A549 (cell line): ENCODE measurements at regions of chr12 and their contacts with region 1.

Region 1: DNA sequence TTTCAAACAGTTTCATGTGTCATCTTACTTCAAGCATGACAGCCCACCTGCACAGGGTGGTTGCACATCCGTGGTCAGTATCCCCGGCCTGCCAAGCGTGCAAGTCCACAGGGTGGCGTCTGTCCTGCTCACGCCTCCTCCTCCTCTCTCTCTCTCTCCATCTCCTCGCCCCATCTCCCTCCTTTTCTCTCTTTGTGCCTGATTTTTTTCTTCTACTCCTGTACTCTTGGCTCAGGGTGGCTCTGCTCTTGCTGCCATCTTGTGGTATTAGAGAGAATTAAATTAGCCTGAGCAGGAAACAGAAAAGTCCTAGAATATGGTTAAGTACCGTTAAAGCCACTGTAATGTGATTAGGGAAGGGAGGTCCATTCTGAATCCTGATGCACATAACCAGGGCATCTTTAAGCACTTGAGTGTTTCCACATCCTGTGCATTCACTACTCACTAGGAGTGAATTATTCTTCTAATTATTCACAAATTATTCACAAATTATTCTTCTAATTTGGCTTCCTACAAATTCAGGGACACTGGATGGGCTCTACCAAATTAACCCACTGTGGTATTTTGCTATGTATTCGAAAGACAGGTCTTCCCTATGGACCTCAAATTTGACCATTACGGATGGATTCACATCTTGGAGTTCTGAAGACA is 25.5 kb upstream of the DTX1 start:
- DNase-seq: peak; percentile 72 to 88
- ATAC-seq: peak; percentile 87 to 98
- H3K4me3 ChIP-seq: no peak overlapping the region
- H3K27ac ChIP-seq: no peak overlapping the region
- H3K4me1 ChIP-seq: no peaks in the 10 kb centered on the region
- CTCF ChIP-seq: peak; percentile 88
- EP300 ChIP-seq: no peak
- POLR2A ChIP-seq: no peak
- RAD21 ChIP-seq: peak; percentile 81 to 83

Region 2: DNA sequence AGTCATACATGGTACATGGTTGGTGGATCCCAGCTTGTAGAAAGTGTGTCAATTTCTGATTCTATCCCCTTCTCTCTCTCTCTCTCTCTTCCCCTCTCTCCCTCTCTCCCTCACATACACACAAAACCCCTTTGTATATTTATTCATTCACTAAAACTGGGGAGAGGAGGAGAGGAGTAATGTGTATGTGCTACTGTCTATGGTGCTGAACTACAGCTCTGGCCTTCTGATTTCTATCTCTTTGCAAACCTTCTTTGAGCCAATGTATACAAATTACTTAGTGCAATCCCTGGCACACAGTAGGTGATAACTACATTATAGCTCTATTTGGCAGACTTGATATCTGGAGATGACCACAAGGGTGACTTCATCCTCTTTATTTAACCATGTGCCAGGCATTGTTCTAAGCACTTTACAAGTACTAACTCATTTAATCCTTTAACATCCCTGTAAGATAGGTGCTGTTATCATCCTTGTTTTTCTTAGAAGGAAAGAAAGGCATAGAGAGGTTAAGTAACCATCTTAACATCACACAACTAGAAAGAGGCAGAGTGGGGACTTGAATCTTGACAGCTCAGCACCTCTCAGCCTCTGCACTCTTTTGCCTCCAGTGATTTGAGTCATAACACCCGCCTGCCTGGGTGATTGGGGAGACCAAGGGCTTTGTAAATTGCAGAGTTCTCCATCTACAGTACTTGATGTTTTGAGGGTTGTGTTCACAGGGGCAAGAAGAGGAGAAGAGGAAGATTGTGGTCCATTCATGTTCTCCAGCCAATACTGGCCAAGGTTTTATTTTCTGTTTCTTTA is 218.2 kb before region 1 on chr12:
- CTCF ChIA-PET with region 1: no interaction called
- POLR2A ChIA-PET with region 1: no interaction called
- DNase-seq: no peak
- ATAC-seq: peak in 1 of 2 experiments; percentile 35; a peak in 1 of 6 replicates
- H3K4me3 ChIP-seq: no peak overlapping the region
- H3K27ac ChIP-seq: no peak overlapping the region
- H3K4me1 ChIP-seq: peaks cover 7% of the 10 kb centered on the region
- CTCF ChIP-seq: no peak
- EP300 ChIP-seq: no peak
- POLR2A ChIP-seq: no peak
- RAD21 ChIP-seq: no peak

Region 3: DNA sequence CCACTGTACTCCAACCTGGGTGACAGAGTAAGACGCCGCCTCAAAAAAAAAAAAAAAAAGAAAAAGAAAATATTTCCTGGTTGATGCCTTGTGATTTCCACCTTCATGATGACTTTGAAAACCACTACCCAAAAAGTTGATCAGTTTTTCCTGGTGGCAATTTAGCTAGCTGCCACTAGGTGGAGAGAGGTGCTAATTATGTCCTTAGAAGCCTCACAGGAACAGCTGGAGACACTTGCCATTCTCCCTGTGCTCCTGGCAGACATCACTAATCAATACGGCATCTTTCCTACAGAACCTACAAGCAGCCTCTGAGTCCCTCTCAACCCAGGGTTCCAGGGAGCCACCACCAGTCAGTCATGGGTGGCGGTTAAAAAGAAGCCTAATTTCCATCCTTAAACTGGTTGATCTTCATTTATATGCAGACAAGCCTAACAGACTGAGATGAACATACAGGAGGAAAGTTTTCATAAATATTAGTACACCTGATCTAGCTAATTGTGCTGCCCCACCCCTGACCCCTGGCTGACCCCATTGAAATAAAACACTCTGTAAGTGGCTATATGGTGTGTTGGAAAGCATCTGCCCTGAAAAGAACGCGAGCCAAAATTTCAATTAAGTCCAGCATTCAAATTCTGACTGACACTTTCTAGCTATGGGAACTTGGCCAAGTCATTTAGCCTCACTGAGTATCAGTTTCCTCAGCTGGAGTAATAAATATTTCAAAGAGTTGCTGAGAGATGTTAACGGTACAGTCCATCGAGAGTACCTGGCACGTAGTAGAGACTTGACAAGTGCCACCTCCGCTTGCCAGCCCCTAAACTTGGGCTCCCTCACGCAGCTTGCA is 130.5 kb before region 1 on chr12:
- CTCF ChIA-PET with region 1: interaction called, 15 read pairs
- POLR2A ChIA-PET with region 1: no interaction called
- DNase-seq: peak; percentile 61 to 79
- ATAC-seq: peak; percentile 35 to 63; a peak in 3 of 6 replicates
- H3K4me3 ChIP-seq: no peak overlapping the region
- H3K27ac ChIP-seq: peak overlapping the region in 1 of 2 experiments; percentile 13; a peak in 2 of 6 replicates
- H3K4me1 ChIP-seq: peaks cover 43% of the 10 kb centered on the region
- CTCF ChIP-seq: peak; percentile 67
- EP300 ChIP-seq: no peak
- POLR2A ChIP-seq: no peak
- RAD21 ChIP-seq: peak; percentile 57 to 75

Region 4: DNA sequence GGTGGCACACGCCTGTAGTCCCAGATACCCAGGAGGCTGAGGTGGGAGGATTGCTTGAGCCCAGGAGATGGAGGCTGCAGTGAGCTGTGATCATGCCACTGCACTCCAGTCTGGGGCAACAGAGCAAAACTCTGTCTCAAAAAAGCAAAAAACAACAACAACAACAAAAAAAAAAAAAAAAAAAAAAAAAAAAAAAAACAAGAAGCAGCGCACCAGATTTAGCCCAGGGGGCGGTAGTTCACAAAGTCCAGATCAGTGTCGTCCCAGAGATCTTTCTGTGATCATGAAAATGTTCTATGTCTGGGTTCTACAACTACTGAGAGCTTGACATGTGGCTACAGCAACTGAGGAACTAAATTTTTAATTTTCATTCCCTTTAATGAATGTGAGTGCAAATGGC is 25.2 kb before region 1 on chr12:
- CTCF ChIA-PET with region 1: interaction called, 10 read pairs
- POLR2A ChIA-PET with region 1: no interaction called
- DNase-seq: peak; percentile 20 to 33
- ATAC-seq: 0 out of 6 replicates have a peak, but pooled peaks of 1 of the 2 experiments have one; percentile 32
- H3K4me3 ChIP-seq: no peak overlapping the region
- H3K27ac ChIP-seq: no peak overlapping the region
- H3K4me1 ChIP-seq: peaks cover 10% of the 10 kb centered on the region; the same call in 1 of the 3 replicates
- CTCF ChIP-seq: peak; percentile 21; the same call in 1 of the 3 replicates
- EP300 ChIP-seq: no peak
- POLR2A ChIP-seq: no peak
- RAD21 ChIP-seq: 0 out of 5 replicates have a peak, but pooled peaks of 1 of the 2 experiments have one; percentile 25

Region 5: GRCh38 chr12:113086249-113087164 is 55.5 kb after region 1 on chr12:
- CTCF ChIA-PET with region 1: no interaction called
- POLR2A ChIA-PET with region 1: no interaction called
- DNase-seq: no peak
- ATAC-seq: no peak
- H3K4me3 ChIP-seq: no peak overlapping the region
- H3K27ac ChIP-seq: no peak overlapping the region
- H3K4me1 ChIP-seq: no peaks in the 10 kb centered on the region
- CTCF ChIP-seq: no peak
- EP300 ChIP-seq: no peak
- POLR2A ChIP-seq: no peak
- RAD21 ChIP-seq: no peak